ENCODE measurements at regions of chr10 and their contacts with region 1.

Region 1: DNA sequence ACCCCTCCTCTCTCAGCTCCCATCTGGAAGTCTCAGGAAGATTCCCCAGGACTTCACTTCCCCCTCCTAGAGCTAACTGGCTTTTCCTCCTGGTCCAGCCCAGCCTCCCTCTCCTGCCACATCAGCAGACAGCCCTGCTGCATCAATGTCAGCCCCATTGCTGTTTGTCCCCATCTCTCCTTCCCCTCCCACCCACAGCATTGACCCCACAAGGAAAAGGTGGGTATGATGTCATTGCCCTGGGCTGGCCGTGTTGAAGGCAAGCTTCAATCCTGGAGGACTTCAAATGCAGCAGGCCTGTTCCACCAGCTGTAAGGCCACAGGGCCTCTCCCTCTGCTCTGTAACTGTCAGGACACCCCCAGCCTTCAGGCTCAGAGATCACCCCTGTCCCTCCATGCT is 66.5 kb downstream of the C10orf105 start:
- DNase-seq: no peak
- ATAC-seq: no peak
- H3K4me3 ChIP-seq: no peak overlapping the region
- H3K27ac ChIP-seq: no peak overlapping the region
- H3K4me1 ChIP-seq: no peaks in the 10 kb centered on the region
- H3K27me3 ChIP-seq: no peaks in the 10 kb centered on the region
- CTCF ChIP-seq: no peak

Region 2: GRCh38 chr10:71372882-71373495 is 280.1 kb before region 1 on chr10:
- CTCF ChIA-PET with region 1: no interaction called
- POLR2A ChIA-PET with region 1: interaction called, 11 read pairs
- in situ Hi-C with region 1: no loop called
- intact Hi-C with region 1: no loop called
- DNase-seq: no peak
- ATAC-seq: no peak
- H3K4me3 ChIP-seq: no peak overlapping the region
- H3K27ac ChIP-seq: no peak overlapping the region
- H3K4me1 ChIP-seq: peaks cover 7% of the 10 kb centered on the region; the same call in 1 of the 2 replicates
- H3K27me3 ChIP-seq: peaks cover 8% of the 10 kb centered on the region; the same call in 1 of the 2 replicates
- CTCF ChIP-seq: no peak

Region 3: GRCh38 chr10:71766702-71767419 is 113.8 kb after region 1 on chr10:
- CTCF ChIA-PET with region 1: no interaction called
- POLR2A ChIA-PET with region 1: interaction called, 11 read pairs
- in situ Hi-C with region 1: no loop called
- intact Hi-C with region 1: no loop called
- DNase-seq: peak; percentile 59
- ATAC-seq: peak; percentile 78
- H3K4me3 ChIP-seq: peak overlapping the region in 1 of 2 experiments; percentile 26; a peak in 2 of 4 replicates
- H3K27ac ChIP-seq: peak overlapping the region; percentile 92
- H3K4me1 ChIP-seq: peaks cover 76% of the 10 kb centered on the region
- H3K27me3 ChIP-seq: no peaks in the 10 kb centered on the region
- CTCF ChIP-seq: no peak

Measured in Panc1 (cell line).